GM12878 (cell line): ENCODE measurements at regions of chr12 and their contacts with region 1.

Region 1: GRCh38 chr12:24991209-24992049 is 42.5 kb upstream of the BCAT1 start:
- DNase-seq: peak; percentile 65
- ATAC-seq: peak; percentile 72
- H3K4me3 ChIP-seq: no peak overlapping the region
- H3K27ac ChIP-seq: no peak overlapping the region
- H3K4me1 ChIP-seq: peaks cover 29% of the 10 kb centered on the region
- H3K27me3 ChIP-seq: no peaks in the 10 kb centered on the region
- CTCF ChIP-seq: peak; percentile 35 to 64 (median 45); a peak in 4 of 6 replicates
- EP300 ChIP-seq: no peak
- POLR2A ChIP-seq: no peak
- RAD21 ChIP-seq: peak; percentile 92

Region 2: DNA sequence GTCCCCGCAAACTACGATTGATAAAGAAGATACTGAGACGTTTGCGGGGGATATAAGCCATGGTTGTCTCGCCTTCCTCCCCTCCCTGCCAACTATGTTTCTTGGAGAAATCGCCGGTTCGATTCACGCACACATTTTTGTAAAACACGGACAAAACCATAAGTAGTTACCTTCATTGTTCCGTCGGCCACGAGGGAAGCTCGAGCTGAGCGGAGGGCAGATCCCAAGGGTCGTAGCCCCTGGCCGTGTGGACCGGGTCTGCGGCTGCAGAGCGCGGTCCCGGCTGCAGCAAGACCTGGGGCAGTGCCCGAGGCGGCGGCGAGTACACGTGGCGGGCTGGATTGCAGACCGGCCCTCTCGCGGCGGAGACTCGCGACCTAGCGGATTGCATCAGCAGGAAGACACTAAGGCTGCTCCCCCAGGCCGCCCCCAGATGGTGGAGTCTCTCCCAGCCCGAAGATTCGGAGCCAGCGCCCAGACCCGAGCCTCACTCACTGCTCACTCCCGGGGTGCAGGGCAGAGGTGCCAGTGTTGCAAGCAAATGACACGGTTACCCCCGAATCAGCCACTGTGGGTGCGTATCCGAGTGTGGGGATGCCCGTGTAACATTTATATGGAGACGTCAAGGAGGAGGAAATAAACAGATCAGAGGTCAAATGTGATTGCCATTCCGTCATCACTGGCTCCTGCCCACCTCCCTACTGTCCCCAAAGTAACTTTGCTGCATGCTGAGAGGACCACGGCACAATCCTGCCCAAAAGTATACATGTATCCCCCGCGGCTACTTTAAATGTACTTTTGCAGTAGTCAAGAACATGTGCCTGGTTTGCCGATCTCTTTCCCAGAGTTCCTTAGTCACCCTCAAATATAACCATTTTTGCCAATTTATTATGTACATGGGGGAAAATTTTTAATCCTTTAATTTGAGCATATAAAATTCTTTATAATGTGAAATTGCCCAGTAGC is 42.4 kb before region 1 on chr12 and contains the start of gene BCAT1:
- CTCF ChIA-PET with region 1: interaction called, 10 read pairs
- POLR2A ChIA-PET with region 1: no interaction called
- RAD21 ChIA-PET with region 1: interaction called, 60 read pairs
- SMC1A ChIA-PET with region 1: interaction called, 69 read pairs
- in situ Hi-C with region 1: no loop called
- intact Hi-C with region 1: loop called (anchors 2 kb)
- DNase-seq: no peak
- ATAC-seq: peak; percentile 41
- H3K4me3 ChIP-seq: peak within 1 kb of the TSS; percentile 85
- H3K27ac ChIP-seq: peak within 1 kb of the TSS; percentile 97
- H3K4me1 ChIP-seq: peaks cover 52% of the 10 kb centered on the region
- H3K27me3 ChIP-seq: no peaks in the 10 kb centered on the region
- CTCF ChIP-seq: peak in 2 of 3 experiments; percentile 7 to 11; a peak in 1 of 6 replicates
- EP300 ChIP-seq: no peak
- POLR2A ChIP-seq: peak; percentile 88
- RAD21 ChIP-seq: no peak
- polyA plus RNA-seq, gene BCAT1: 26.2 to 38.1 TPM

Region 3: DNA sequence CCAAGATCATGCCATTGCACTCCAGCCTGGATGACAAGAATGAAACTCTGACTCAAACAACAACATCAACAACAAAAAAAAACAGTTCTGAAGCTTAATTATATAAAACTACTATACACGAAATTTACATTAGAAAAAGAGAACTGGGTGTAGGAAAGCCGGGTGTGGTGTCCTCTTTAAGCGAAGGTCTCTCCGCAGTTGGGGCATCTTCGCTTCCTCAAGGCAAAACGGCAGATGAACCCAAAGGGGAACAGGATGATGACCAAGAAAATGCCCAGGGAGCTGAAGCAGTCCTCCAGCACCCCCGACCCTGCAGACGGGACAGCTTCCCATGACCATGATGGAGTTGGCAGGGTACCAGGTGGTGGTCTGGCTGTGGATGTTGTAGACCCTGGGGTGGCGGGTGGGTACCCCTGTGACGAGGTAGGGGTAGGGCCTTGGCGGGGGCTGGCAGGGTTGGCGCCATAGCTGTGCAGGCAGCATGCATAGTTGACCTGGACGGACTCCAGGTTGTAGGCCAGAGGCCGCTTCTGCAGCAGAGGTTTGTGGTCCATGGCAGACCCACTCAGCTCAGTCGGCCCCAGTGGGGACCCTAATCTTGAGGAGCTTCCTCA is 24.4 kb before region 1 on chr12:
- CTCF ChIA-PET with region 1: interaction called, 21 read pairs
- POLR2A ChIA-PET with region 1: no interaction called
- RAD21 ChIA-PET with region 1: interaction called, 8 read pairs
- SMC1A ChIA-PET with region 1: interaction called, 28 read pairs
- in situ Hi-C with region 1: no loop called
- intact Hi-C with region 1: no loop called
- DNase-seq: no peak
- ATAC-seq: no peak
- H3K4me3 ChIP-seq: no peak overlapping the region
- H3K27ac ChIP-seq: no peak overlapping the region
- H3K4me1 ChIP-seq: no peaks in the 10 kb centered on the region
- H3K27me3 ChIP-seq: no peaks in the 10 kb centered on the region
- CTCF ChIP-seq: no peak
- EP300 ChIP-seq: no peak
- POLR2A ChIP-seq: no peak
- RAD21 ChIP-seq: no peak

Region 4: DNA sequence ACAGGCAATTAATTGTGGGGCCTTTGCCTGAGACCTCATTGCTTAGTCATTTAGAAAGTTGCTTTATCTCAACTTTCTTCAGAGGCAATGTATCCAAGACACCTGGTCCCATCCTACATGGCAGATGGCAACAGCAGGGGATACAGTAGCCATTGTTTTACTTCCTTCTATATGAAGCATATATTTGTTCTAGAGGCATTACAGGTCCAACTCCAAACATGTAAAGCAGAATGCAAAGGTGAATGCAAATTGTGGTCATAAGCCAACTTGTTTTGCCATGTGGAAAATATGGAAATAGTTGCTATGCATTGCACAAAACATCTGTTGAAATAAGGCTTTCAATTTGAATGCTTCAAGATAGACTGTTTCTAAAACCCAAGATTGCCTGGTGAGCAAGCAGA is 67.2 kb after region 1 on chr12:
- CTCF ChIA-PET with region 1: interaction called, 141 read pairs
- POLR2A ChIA-PET with region 1: interaction called, 297 read pairs
- RAD21 ChIA-PET with region 1: interaction called, 462 read pairs
- SMC1A ChIA-PET with region 1: interaction called, 526 read pairs
- in situ Hi-C with region 1: no loop called
- intact Hi-C with region 1: no loop called
- DNase-seq: peak; percentile 58
- ATAC-seq: peak; percentile 42
- H3K4me3 ChIP-seq: peak overlapping the region; percentile 89
- H3K27ac ChIP-seq: peak overlapping the region; percentile 65
- H3K4me1 ChIP-seq: peaks cover 39% of the 10 kb centered on the region
- H3K27me3 ChIP-seq: no peaks in the 10 kb centered on the region
- CTCF ChIP-seq: no peak
- EP300 ChIP-seq: peak in 1 of 2 experiments; percentile 69; a peak in 1 of 4 replicates
- POLR2A ChIP-seq: no peak; the same call in 1 of the 2 replicates
- RAD21 ChIP-seq: no peak

Region 5: GRCh38 chr12:25107920-25108319 is 116.5 kb after region 1 on chr12:
- CTCF ChIA-PET with region 1: interaction called, 27 read pairs
- POLR2A ChIA-PET with region 1: interaction called, 5 read pairs
- RAD21 ChIA-PET with region 1: interaction called, 19 read pairs
- SMC1A ChIA-PET with region 1: interaction called, 25 read pairs
- in situ Hi-C with region 1: no loop called
- intact Hi-C with region 1: no loop called
- DNase-seq: peak; percentile 64
- ATAC-seq: peak; percentile 86
- H3K4me3 ChIP-seq: no peak overlapping the region
- H3K27ac ChIP-seq: peak overlapping the region; percentile 60
- H3K4me1 ChIP-seq: peaks cover 16% of the 10 kb centered on the region
- H3K27me3 ChIP-seq: no peaks in the 10 kb centered on the region
- CTCF ChIP-seq: no peak
- EP300 ChIP-seq: peak; percentile 33 to 95; a peak in 3 of 4 replicates
- POLR2A ChIP-seq: no peak
- RAD21 ChIP-seq: no peak

Region 6: GRCh38 chr12:25151476-25151875 is 160.0 kb after region 1 on chr12:
- CTCF ChIA-PET with region 1: interaction called, 56 read pairs
- POLR2A ChIA-PET with region 1: no interaction called
- RAD21 ChIA-PET with region 1: interaction called, 25 read pairs
- SMC1A ChIA-PET with region 1: interaction called, 31 read pairs
- in situ Hi-C with region 1: no loop called
- intact Hi-C with region 1: no loop called
- DNase-seq: no peak
- ATAC-seq: no peak
- H3K4me3 ChIP-seq: no peak overlapping the region
- H3K27ac ChIP-seq: no peak overlapping the region
- H3K4me1 ChIP-seq: peaks cover 17% of the 10 kb centered on the region
- H3K27me3 ChIP-seq: no peaks in the 10 kb centered on the region
- CTCF ChIP-seq: no peak
- EP300 ChIP-seq: no peak
- POLR2A ChIP-seq: no peak
- RAD21 ChIP-seq: no peak